ENCODE measurements at regions of chr2 and their contacts with region 1.

Region 1: DNA sequence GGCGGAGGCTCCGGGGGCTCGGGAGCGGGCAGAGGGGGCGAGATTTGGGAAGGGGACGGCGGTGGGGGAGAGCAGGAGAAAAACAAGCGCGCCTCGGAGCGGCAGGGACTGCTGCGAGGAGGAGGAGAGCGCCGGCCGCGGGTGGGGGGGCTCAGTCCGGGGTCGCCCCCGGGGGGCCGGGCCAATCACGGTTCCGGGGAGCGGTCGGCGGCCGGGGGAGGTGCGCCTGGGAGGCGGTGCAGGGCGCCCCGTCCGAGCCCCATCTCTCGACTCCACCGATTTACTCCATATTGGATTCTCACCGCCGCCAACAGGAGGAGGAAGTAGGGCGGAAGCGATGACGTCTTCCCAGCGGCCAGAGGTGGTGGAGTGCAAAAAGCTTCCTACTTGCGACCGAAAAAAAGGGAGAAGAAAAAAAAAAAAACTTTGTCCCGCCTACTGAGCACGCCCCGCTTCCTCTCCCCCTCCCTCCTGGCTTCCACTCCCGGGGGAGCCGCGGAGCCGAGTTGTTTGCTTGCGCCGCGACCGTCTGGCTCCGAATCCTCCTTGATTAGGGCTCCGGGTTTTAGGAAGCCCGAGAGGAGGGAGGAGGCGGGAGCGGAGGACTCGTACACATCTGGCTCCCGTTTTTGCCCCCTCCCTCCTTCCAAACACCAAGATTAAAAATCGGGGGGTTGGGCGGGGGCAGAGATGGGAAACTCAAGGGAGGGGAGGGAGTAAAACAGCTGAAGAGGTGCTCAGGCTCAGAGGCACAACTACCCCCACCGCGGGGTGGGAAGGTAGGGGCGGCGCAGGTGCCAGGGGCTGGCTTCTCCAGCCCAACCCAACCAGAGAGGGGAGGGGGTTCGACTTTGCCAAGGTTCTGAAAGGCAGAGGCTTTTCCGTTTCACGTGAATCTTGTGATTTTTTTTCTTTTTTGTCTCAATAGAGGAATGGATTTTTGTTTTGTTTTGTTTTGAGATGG is at the start of gene SPRED2:
- DNase-seq: peak; percentile 95
- H3K4me3 ChIP-seq: peak within 1 kb of the TSS; percentile 80
- H3K4me3 Mint-ChIP-seq: peak within 1 kb of the TSS; percentile 78
- H3K27ac Mint-ChIP-seq: peak within 1 kb of the TSS; percentile 84
- H3K4me1 ChIP-seq: peaks cover 10% of the 10 kb centered on the region
- H3K4me1 Mint-ChIP-seq: peaks cover 7% of the 10 kb centered on the region
- H3K27me3 ChIP-seq: no peaks in the 10 kb centered on the region
- H3K27me3 Mint-ChIP-seq: no peaks in the 10 kb centered on the region
- CTCF ChIP-seq: peak in 1 of 2 experiments; percentile 16
- total RNA-seq, gene SPRED2: 49.9 and 55.3 TPM in 2 replicates

Region 2: GRCh38 chr2:65300761-65301711 is 131.5 kb before region 1 on chr2:
- CTCF ChIA-PET with region 1: no interaction called
- POLR2A ChIA-PET with region 1: no interaction called
- intact Hi-C with region 1: loop called (anchors 10 kb)
- DNase-seq: peak; percentile 76 to 80
- H3K4me3 ChIP-seq: no peak overlapping the region
- H3K4me3 Mint-ChIP-seq: peak overlapping the region; percentile 35
- H3K27ac Mint-ChIP-seq: peak overlapping the region; percentile 14
- H3K4me1 ChIP-seq: peaks cover 22% of the 10 kb centered on the region
- H3K4me1 Mint-ChIP-seq: peaks cover 23% of the 10 kb centered on the region
- H3K27me3 ChIP-seq: no peaks in the 10 kb centered on the region
- H3K27me3 Mint-ChIP-seq: no peaks in the 10 kb centered on the region
- CTCF ChIP-seq: no peak

Region 3: DNA sequence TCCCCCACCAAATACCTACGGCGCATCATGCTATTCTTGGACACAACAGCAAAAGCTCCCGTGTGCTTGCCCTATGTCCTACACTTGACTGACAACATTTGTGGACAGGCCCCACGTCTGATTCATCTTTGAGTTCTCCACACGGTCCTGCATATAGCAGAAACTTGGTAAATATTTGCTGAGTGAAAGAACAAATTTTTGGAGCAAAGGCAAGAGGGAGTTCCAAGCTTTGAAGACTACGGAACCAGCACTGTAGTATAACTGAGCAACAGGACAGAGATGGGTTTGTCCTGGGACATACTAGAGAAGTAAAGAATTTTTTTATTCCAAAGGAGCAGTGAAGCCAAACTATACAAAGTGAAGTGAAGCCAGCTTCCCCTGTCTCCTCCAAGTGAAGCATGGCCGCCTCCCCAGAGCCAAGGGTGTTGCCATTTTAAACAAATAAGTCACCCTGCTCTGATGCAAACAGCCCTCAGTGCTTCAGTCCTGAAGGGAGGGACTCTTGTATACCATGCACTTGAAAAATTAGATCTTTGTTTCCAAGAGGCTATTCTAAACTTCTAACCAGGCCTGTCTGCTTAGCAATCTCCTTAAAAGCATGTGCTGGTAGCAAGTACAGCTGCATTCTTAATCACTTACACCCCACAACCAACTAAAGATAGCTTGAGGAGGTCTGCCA is 36.0 kb before region 1 on chr2:
- CTCF ChIA-PET with region 1: no interaction called
- POLR2A ChIA-PET with region 1: no interaction called
- intact Hi-C with region 1: loop called (anchors 2 kb)
- DNase-seq: peak; percentile 39
- H3K4me3 ChIP-seq: no peak overlapping the region
- H3K4me3 Mint-ChIP-seq: peak overlapping the region; percentile 47
- H3K27ac Mint-ChIP-seq: peak overlapping the region; percentile 4
- H3K4me1 ChIP-seq: peaks cover 30% of the 10 kb centered on the region
- H3K4me1 Mint-ChIP-seq: peaks cover 25% of the 10 kb centered on the region
- H3K27me3 ChIP-seq: no peaks in the 10 kb centered on the region
- H3K27me3 Mint-ChIP-seq: no peaks in the 10 kb centered on the region
- CTCF ChIP-seq: no peak

Region 4: GRCh38 chr2:65527451-65528240 is 95.1 kb after region 1 on chr2:
- CTCF ChIA-PET with region 1: no interaction called
- POLR2A ChIA-PET with region 1: interaction called, 5 read pairs
- intact Hi-C with region 1: loop called (anchors 1 kb)
- DNase-seq: peak; percentile 86 to 91
- H3K4me3 ChIP-seq: no peak overlapping the region
- H3K4me3 Mint-ChIP-seq: no peak overlapping the region
- H3K27ac Mint-ChIP-seq: no peak overlapping the region
- H3K4me1 ChIP-seq: peaks cover 21% of the 10 kb centered on the region
- H3K4me1 Mint-ChIP-seq: peaks cover 28% of the 10 kb centered on the region
- H3K27me3 ChIP-seq: no peaks in the 10 kb centered on the region
- H3K27me3 Mint-ChIP-seq: no peaks in the 10 kb centered on the region
- CTCF ChIP-seq: peak in 1 of 2 experiments; percentile 31

Region 5: GRCh38 chr2:65638443-65638842 is 205.9 kb after region 1 on chr2:
- CTCF ChIA-PET with region 1: no interaction called
- POLR2A ChIA-PET with region 1: no interaction called
- intact Hi-C with region 1: no loop called
- DNase-seq: no peak
- H3K4me3 ChIP-seq: no peak overlapping the region
- H3K4me3 Mint-ChIP-seq: no peak overlapping the region
- H3K27ac Mint-ChIP-seq: no peak overlapping the region
- H3K4me1 ChIP-seq: no peaks in the 10 kb centered on the region
- H3K4me1 Mint-ChIP-seq: no peaks in the 10 kb centered on the region
- H3K27me3 ChIP-seq: no peaks in the 10 kb centered on the region
- H3K27me3 Mint-ChIP-seq: peaks cover 12% of the 10 kb centered on the region
- CTCF ChIP-seq: peak; percentile 21 to 43

Region 6: GRCh38 chr2:65661980-65662653 is 229.6 kb after region 1 on chr2:
- CTCF ChIA-PET with region 1: no interaction called
- POLR2A ChIA-PET with region 1: no interaction called
- intact Hi-C with region 1: no loop called
- DNase-seq: no peak
- H3K4me3 ChIP-seq: no peak overlapping the region
- H3K4me3 Mint-ChIP-seq: no peak overlapping the region
- H3K27ac Mint-ChIP-seq: no peak overlapping the region
- H3K4me1 ChIP-seq: peaks cover 16% of the 10 kb centered on the region
- H3K4me1 Mint-ChIP-seq: peaks cover 7% of the 10 kb centered on the region
- H3K27me3 ChIP-seq: no peaks in the 10 kb centered on the region
- H3K27me3 Mint-ChIP-seq: peaks cover 4% of the 10 kb centered on the region
- CTCF ChIP-seq: no peak